CD8-positive, alpha-beta T cell (primary cell): ENCODE measurements at regions of chr4 and their contacts with region 1.

Region 1: DNA sequence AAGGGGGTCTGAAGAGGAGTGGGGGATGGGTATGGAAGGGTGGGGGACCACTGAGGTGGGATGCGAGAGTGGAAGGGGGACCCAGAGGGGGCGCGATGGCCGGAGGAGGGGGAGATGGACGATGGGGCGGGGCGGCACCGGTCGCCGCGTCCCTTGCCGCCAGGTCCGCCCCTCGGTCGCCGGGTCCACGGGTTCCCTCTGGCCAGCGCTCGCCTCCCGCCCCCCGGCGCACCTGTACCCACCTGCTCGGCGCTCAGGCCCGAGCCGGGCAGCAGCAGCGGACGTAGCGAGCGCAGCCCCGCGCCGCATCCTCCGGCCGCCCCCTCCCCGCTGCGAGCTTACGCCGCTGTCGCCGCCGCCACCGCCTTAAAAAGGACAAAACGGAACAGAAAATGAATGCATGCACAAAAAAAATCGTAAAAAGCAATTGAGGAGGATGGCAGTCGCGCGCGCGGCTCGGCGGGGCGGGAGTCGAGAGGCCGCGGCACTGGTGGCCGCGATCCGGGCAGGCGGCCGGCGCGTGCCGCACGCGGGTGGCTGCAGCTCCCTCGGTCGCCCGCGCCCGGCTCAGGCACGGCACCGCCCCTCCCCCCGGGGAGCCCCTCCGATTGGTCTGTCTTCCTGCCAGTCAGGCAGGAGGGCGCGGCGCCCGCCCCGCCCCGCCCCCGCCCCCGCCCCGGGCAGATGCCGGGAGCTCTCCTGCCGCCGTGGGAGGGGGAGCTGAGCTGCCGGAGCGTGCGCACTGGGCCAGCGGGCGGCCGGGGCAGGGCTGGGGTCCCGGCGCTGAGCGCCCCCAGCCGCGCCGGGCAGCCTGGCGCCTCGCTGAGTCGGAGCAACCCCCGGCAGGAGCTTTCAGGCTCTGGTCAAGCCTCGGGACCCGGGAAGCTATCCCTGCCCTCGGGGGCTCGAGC is at the start of gene JAKMIP1:
- DNase-seq: peak; percentile 69 to 88 (median 80)
- ATAC-seq: peak; percentile 61
- H3K4me3 ChIP-seq: peak within 1 kb of the TSS; percentile 37 to 56
- H3K4me3 Mint-ChIP-seq: peak within 1 kb of the TSS; percentile 79
- H3K27ac ChIP-seq: peak within 1 kb of the TSS; percentile 44 to 88
- H3K27ac Mint-ChIP-seq: peak within 1 kb of the TSS; percentile 70
- H3K4me1 ChIP-seq: peaks cover 21% of the 10 kb centered on the region
- H3K4me1 Mint-ChIP-seq: peaks cover 32% of the 10 kb centered on the region
- H3K27me3 ChIP-seq: peaks cover 0 to 9% of the 10 kb centered on the region in 2 experiments
- H3K27me3 Mint-ChIP-seq: peaks cover 41% of the 10 kb centered on the region
- CTCF ChIP-seq: no peak
- total RNA-seq, gene JAKMIP1: 2.3 to 3.0 TPM

Region 2: GRCh38 chr4:6180841-6181631 is 19.2 kb before region 1 on chr4:
- CTCF ChIA-PET with region 1: no interaction called
- POLR2A ChIA-PET with region 1: interaction called, 6 read pairs
- intact Hi-C with region 1: loop called in 1 of 2 experiments (anchors 1 kb)
- DNase-seq: peak in 6 of 9 experiments; percentile 43 to 91 (median 68)
- ATAC-seq: peak; percentile 74
- H3K4me3 ChIP-seq: no peak overlapping the region
- H3K4me3 Mint-ChIP-seq: no peak overlapping the region
- H3K27ac ChIP-seq: peak overlapping the region in 1 of 2 experiments; percentile 68
- H3K27ac Mint-ChIP-seq: peak overlapping the region; percentile 92
- H3K4me1 ChIP-seq: peaks cover 62% of the 10 kb centered on the region
- H3K4me1 Mint-ChIP-seq: peaks cover 63% of the 10 kb centered on the region
- H3K27me3 ChIP-seq: no peaks in the 10 kb centered on the region
- H3K27me3 Mint-ChIP-seq: peaks cover 4% of the 10 kb centered on the region
- CTCF ChIP-seq: no peak

Region 3: GRCh38 chr4:6269616-6270511 is 69.6 kb after region 1 on chr4 and contains the start of gene WFS1:
- CTCF ChIA-PET with region 1: no interaction called
- POLR2A ChIA-PET with region 1: no interaction called
- intact Hi-C with region 1: loop called in 1 of 2 experiments (anchors 2 kb)
- DNase-seq: peak; percentile 93 to 99 (median 97)
- ATAC-seq: peak; percentile 98
- H3K4me3 ChIP-seq: peak within 1 kb of the TSS; percentile 56 to 70
- H3K4me3 Mint-ChIP-seq: peak within 1 kb of the TSS; percentile 87
- H3K27ac ChIP-seq: peak within 1 kb of the TSS in 1 of 2 experiments; percentile 11
- H3K27ac Mint-ChIP-seq: peak within 1 kb of the TSS; percentile 41
- H3K4me1 ChIP-seq: peaks cover 13% of the 10 kb centered on the region
- H3K4me1 Mint-ChIP-seq: peaks cover 20% of the 10 kb centered on the region
- H3K27me3 ChIP-seq: no peaks in the 10 kb centered on the region
- H3K27me3 Mint-ChIP-seq: no peaks in the 10 kb centered on the region
- CTCF ChIP-seq: no peak
- total RNA-seq, gene WFS1: 1.2 to 1.8 TPM